Head of caudate nucleus (tissue), 42 donors: ENCODE measurements at regions of chr12 and their contacts with region 1.

Region 1: DNA sequence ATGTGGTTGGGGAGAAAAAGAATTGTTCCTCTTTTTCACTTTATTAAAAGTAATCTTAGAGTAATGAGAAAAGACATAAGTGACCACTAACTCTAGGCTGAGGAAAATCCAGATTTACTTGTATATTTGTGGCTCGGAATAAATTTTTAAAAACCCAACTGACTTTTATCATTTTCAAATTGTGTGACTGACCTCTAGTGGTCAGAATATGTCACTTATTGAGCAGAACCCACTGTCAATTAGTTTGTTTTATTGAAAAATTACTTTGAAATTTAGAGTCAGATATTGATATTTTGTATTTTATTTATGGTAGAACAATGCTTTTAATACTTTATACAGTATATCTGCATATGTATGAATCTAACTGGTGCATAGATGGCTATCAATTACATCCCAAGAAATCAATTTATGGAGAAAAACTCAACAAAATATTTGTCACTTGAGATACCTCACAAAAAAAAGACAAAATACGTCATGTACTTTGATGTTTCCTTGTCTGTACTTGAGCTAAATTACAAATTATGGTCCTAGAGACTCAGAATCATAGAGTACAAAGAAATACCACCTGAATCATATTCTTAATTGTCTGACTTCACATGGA is 229.4 kb downstream of the CNTN1 start:
- DNase-seq: no peak

Region 2: DNA sequence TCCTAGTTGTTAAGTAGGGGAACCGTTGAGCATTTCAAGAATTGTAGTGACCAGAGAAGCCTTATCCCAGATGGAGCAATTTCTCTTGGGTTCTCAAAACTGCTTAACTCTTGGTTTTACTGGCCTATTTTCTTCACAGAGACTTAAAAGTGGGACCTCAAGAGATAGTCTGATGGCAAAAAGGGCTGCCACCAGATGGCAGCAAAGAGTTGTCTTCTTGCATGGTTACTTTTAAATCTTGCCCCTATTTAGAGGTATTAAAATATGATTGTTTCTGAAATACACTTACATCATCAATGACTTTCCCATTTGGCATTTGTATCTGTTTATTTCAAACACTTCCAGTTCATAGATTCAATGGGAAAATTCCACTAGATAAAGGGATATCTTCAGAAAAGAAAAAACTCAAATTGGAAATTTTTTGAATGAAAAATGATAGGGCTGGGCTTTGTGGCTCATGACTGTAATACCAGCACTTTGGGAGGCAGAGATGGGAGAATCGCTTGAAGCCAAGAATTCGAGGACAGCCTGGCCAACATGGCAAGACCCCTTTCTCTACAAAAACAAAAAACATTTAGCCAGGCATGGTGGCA is 299.3 kb before region 1 on chr12:
- intact Hi-C with region 1: loop called (anchors 5 kb)
- DNase-seq: peak; percentile 8 to 89 (median 74)

Region 3: GRCh38 chr12:40717576-40717975 is 204.1 kb before region 1 on chr12:
- intact Hi-C with region 1: no loop called
- DNase-seq: no peak

Region 4: GRCh38 chr12:40854604-40855003 is 67.1 kb before region 1 on chr12:
- intact Hi-C with region 1: no loop called
- DNase-seq: no peak

Region 5: GRCh38 chr12:41014643-41015020 is 93.0 kb after region 1 on chr12:
- intact Hi-C with region 1: no loop called
- DNase-seq: no peak